Natural killer cell (primary cell): ENCODE measurements at regions of chr2 and their contacts with region 1.

Region 1: GRCh38 chr2:176126929-176127773 is 2.4 kb upstream of the HOXD8 start:
- DNase-seq: peak; percentile 57 to 87
- ATAC-seq: peak in 1 of 3 donors; percentile 32
- H3K4me3 ChIP-seq: no peak overlapping the region
- H3K4me3 Mint-ChIP-seq: peak overlapping the region; percentile 40
- H3K27ac ChIP-seq: no peak overlapping the region
- H3K27ac Mint-ChIP-seq: peak overlapping the region in 1 of 2 donors; percentile 18
- H3K4me1 ChIP-seq: peaks cover 26% of the 10 kb centered on the region
- H3K4me1 Mint-ChIP-seq: peaks cover 22 to 27% of the 10 kb centered on the region in 2 donors
- H3K27me3 ChIP-seq: peaks cover 82% of the 10 kb centered on the region
- H3K27me3 Mint-ChIP-seq: peaks cover 69 to 75% of the 10 kb centered on the region in 2 donors
- CTCF ChIP-seq: peak; percentile 93

Region 2: GRCh38 chr2:176088048-176088936 is 38.9 kb before region 1 on chr2:
- intact Hi-C with region 1: loop called (anchors 5 kb)
- DNase-seq: peak in 1 of 2 donors; percentile 48
- ATAC-seq: peak in 2 of 3 donors; percentile 48 to 50
- H3K4me3 ChIP-seq: no peak overlapping the region
- H3K4me3 Mint-ChIP-seq: peak overlapping the region; percentile 65
- H3K27ac ChIP-seq: no peak overlapping the region
- H3K27ac Mint-ChIP-seq: no peak overlapping the region
- H3K4me1 ChIP-seq: peaks cover 12% of the 10 kb centered on the region
- H3K4me1 Mint-ChIP-seq: peaks cover 15 to 24% of the 10 kb centered on the region in 2 donors
- H3K27me3 ChIP-seq: peaks cover 88% of the 10 kb centered on the region
- H3K27me3 Mint-ChIP-seq: peaks cover 73 to 87% of the 10 kb centered on the region in 2 donors
- CTCF ChIP-seq: no peak

Region 3: GRCh38 chr2:176500901-176501300 is 373.8 kb after region 1 on chr2:
- intact Hi-C with region 1: no loop called
- DNase-seq: no peak
- ATAC-seq: no peak
- H3K4me3 ChIP-seq: no peak overlapping the region
- H3K4me3 Mint-ChIP-seq: no peak overlapping the region
- H3K27ac ChIP-seq: no peak overlapping the region
- H3K27ac Mint-ChIP-seq: no peak overlapping the region
- H3K4me1 ChIP-seq: no peaks in the 10 kb centered on the region
- H3K4me1 Mint-ChIP-seq: peaks cover 0 to 4% of the 10 kb centered on the region in 2 donors
- H3K27me3 ChIP-seq: peaks cover 6% of the 10 kb centered on the region
- H3K27me3 Mint-ChIP-seq: peaks cover 29 to 49% of the 10 kb centered on the region in 2 donors
- CTCF ChIP-seq: no peak

Region 4: DNA sequence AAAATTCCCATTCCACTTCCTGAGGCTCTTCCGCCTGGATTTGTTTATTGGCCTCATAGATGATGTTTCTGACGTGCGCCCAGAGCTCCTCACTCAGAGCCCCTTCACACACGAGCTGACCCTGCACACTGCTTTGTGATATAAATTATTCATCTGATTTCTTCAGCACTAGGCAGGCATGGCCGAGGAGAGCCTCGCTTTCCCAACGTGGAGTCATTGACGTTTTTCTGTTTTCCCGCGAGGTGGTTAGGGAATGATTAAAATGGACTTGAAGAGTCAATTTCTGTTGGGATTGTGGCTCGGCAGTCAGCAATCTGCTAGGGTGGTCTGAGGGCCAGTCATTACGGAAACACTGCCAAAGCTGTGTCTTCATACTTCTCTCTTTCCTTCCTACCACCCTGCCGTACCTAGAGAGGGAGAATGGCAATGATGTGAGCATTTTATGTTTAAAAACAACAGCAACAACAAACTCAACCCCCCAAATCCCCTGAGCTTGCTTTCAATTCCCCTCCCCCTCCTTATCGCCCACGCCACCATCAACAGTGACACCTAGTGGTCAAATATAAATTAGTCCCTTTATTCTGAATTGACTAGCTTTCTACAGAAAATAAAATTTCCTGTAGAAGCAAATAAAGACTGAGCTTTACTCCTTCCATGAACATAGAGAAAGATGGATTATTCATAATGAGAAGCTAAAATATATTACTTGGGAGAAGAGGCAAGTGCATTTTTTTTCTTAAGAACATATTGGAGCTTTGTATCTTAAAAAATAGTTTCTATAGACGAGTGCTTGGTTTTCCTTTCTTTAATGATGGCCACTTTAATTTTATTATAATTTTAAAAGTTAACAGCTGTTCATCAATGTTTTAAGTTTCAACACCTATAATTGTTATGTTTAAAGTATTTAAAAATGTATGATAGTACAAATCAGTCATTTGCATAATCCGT is 427.2 kb after region 1 on chr2:
- intact Hi-C with region 1: loop called (anchors 5 kb)
- DNase-seq: peak in 1 of 2 donors; percentile 74
- ATAC-seq: peak; percentile 62 to 70 (median 64)
- H3K4me3 ChIP-seq: peak overlapping the region; percentile 22
- H3K4me3 Mint-ChIP-seq: peak overlapping the region; percentile 77
- H3K27ac ChIP-seq: no peak overlapping the region
- H3K27ac Mint-ChIP-seq: no peak overlapping the region
- H3K4me1 ChIP-seq: peaks cover 10% of the 10 kb centered on the region
- H3K4me1 Mint-ChIP-seq: peaks cover 12 to 14% of the 10 kb centered on the region in 2 donors
- H3K27me3 ChIP-seq: peaks cover 16% of the 10 kb centered on the region
- H3K27me3 Mint-ChIP-seq: peaks cover 29 to 60% of the 10 kb centered on the region in 2 donors
- CTCF ChIP-seq: peak; percentile 73

Region 5: DNA sequence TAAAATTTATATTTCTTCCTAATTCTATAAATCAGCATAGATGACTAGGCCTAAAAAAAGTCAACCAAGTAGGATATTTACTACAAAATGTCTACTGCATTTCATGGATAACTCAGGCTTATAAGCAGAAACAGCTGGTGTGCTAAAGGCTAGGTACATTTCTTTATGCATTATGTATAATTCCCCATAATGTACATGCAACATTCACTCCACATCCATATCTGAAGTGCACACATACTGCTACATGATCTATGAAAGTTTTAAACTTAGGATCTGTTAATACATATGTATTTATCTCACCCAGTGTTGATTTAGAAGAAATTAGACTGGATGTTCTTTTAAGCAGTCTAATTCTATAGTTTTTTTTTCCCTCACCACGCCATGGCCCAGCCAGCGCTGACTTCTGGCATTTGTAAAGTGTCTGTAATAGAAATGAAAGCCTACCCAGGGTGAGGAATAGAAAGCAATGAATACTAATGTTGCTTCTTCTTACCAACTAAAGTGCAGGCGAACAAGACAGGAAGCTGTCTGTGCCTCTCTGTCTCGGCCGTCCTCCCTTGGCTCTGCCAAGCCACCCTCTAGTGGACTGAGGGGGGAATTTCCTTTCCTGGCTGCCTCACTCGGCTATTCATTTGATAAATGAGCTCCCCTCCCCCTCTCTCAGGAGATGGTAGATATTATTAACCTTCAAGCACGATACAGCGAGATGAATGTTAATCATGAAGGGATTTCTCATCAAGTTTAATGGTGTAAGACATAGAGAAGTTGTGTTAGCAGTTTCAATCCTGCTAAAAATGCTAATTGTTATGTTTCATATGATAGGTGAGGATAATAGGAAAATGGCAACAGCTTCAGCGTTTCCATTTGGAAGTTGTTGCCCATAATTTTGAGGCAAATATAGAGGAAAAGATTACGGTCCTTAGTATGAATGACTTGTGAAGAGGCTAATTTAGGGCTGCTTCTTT is 526.6 kb after region 1 on chr2:
- intact Hi-C with region 1: loop called (anchors 1 kb)
- DNase-seq: peak in 1 of 2 donors; percentile 48
- ATAC-seq: peak; percentile 72 to 79 (median 73)
- H3K4me3 ChIP-seq: no peak overlapping the region
- H3K4me3 Mint-ChIP-seq: no peak overlapping the region
- H3K27ac ChIP-seq: no peak overlapping the region
- H3K27ac Mint-ChIP-seq: no peak overlapping the region
- H3K4me1 ChIP-seq: no peaks in the 10 kb centered on the region
- H3K4me1 Mint-ChIP-seq: peaks cover 0 to 4% of the 10 kb centered on the region in 2 donors
- H3K27me3 ChIP-seq: peaks cover 19% of the 10 kb centered on the region
- H3K27me3 Mint-ChIP-seq: peaks cover 37 to 77% of the 10 kb centered on the region in 2 donors
- CTCF ChIP-seq: peak; percentile 48

Region 6: GRCh38 chr2:177148477-177149154 is 1021.5 kb after region 1 on chr2:
- intact Hi-C with region 1: loop called (anchors 1 kb)
- DNase-seq: peak; percentile 53 to 86
- ATAC-seq: peak; percentile 89 to 92 (median 91)
- H3K4me3 ChIP-seq: peak overlapping the region; percentile 29
- H3K4me3 Mint-ChIP-seq: peak overlapping the region; percentile 90
- H3K27ac ChIP-seq: no peak overlapping the region
- H3K27ac Mint-ChIP-seq: peak overlapping the region in 1 of 2 donors; percentile 42
- H3K4me1 ChIP-seq: peaks cover 8% of the 10 kb centered on the region
- H3K4me1 Mint-ChIP-seq: peaks cover 11 to 12% of the 10 kb centered on the region in 2 donors
- H3K27me3 ChIP-seq: peaks cover 26% of the 10 kb centered on the region
- H3K27me3 Mint-ChIP-seq: peaks cover 44 to 54% of the 10 kb centered on the region in 2 donors
- CTCF ChIP-seq: peak; percentile 92